Activated T-helper 2 cell treated with anti-CD3 and anti-CD28 coated beads, Interferon-gamma antibody, Interleukin-2, Interleukin-4, amounts not matched to agents 10 μg/mL and 5 μg/mL and 100 μg/mL, durations not matched to agents 14 hours and 24 hours and 36 hours (primary cell): ENCODE measurements at regions of chr1 and their contacts with region 1.

Region 1: DNA sequence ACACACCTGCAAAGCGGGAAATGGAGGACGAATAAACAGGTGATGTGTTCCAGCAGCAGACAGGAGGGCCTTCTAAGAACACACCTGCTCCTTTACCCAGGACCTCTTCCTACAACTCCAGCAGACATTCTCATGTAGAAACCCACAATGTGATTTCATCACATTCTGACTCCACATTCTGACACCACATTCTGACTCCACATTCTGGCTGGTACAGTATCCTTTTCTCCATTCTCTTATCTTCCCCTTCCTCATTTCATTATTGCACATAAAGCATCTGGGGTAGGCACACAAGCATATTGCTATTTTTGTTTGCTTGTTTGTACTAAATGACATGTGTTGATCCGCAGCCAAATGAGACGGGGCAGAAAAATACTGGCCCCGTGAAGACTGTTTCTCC is 3.6 kb upstream of the ZNF124 start:
- DNase-seq: no peak
- H3K4me3 Mint-ChIP-seq: no peak overlapping the region
- H3K27ac Mint-ChIP-seq: no peak overlapping the region
- H3K4me1 Mint-ChIP-seq: peaks cover 1% of the 10 kb centered on the region
- H3K27me3 Mint-ChIP-seq: no peaks in the 10 kb centered on the region

Region 2: GRCh38 chr1:247118946-247119446 is 56.5 kb before region 1 on chr1:
- intact Hi-C with region 1: loop called (anchors 2 kb)
- DNase-seq: no peak
- H3K4me3 Mint-ChIP-seq: no peak overlapping the region
- H3K27ac Mint-ChIP-seq: no peak overlapping the region
- H3K4me1 Mint-ChIP-seq: no peaks in the 10 kb centered on the region
- H3K27me3 Mint-ChIP-seq: peaks cover under 1% of the 10 kb centered on the region